ENCODE measurements at regions of chr7 and their contacts with region 1.

Region 1: GRCh38 chr7:38222481-38223096 is 44.5 kb downstream of the STARD3NL start:
- DNase-seq: no peak
- ATAC-seq: peak; percentile 85

Region 2: DNA sequence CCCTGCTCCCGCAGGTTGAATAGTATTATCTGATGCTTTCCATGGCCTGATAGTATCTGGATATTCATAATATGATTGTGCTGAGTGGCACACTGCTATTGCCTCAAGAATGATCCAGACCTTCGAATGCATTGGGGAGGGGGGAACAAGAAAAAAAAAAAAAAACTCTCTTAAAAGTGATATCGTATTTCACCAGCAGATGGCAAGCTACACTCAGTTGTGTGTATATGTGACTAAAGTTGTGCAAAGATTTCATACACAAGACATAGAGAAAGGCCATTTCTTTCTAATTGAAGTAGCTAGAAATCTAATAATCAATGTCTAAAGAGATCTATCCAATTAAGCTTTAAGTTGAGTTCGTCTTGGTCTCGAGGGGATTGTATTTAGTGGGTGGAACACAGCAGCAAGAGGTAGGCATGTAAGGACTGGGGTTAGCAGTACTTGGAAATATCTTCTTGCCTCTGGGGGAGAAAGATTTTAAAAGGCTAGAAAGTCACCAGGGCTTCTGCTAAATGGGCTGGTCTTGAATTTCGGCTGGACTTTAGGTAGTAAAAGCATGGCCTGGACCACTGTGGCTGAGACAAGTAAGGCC is 321.3 kb before region 1 on chr7:
- intact Hi-C with region 1: loop called (anchors 5 kb)
- DNase-seq: no peak
- ATAC-seq: peak; percentile 65

Region 3: GRCh38 chr7:38107486-38107893 is 115.1 kb before region 1 on chr7:
- intact Hi-C with region 1: loop called (anchors 5 kb)
- DNase-seq: peak; percentile 37
- ATAC-seq: peak; percentile 72

Region 4: GRCh38 chr7:38306171-38306570 is 83.6 kb after region 1 on chr7:
- intact Hi-C with region 1: no loop called
- DNase-seq: no peak
- ATAC-seq: no peak